Activated naive CD4-positive, alpha-beta T cell treated with anti-CD3 and anti-CD28 coated beads for 36 hours (primary cell): ENCODE measurements at regions of chr1 and their contacts with region 1.

Region 1: GRCh38 chr1:152869808-152870419 is 8.2 kb upstream of the SMCP start:
- DNase-seq: peak; percentile 79
- H3K4me3 Mint-ChIP-seq: no peak overlapping the region
- H3K27ac Mint-ChIP-seq: no peak overlapping the region
- H3K4me1 Mint-ChIP-seq: no peaks in the 10 kb centered on the region
- H3K27me3 Mint-ChIP-seq: peaks cover 3% of the 10 kb centered on the region

Region 2: GRCh38 chr1:152566681-152567080 is 303.2 kb before region 1 on chr1 and contains the start of gene LCE3E:
- CTCF ChIA-PET with region 1: no interaction called
- intact Hi-C with region 1: no loop called
- DNase-seq: no peak
- H3K4me3 Mint-ChIP-seq: no peak within 1 kb of the TSS
- H3K27ac Mint-ChIP-seq: no peak within 1 kb of the TSS
- H3K4me1 Mint-ChIP-seq: no peaks in the 10 kb centered on the region
- H3K27me3 Mint-ChIP-seq: peaks cover 8% of the 10 kb centered on the region
- total RNA-seq, gene LCE3E: not detected

Region 3: GRCh38 chr1:152654110-152654509 is 215.8 kb before region 1 on chr1:
- CTCF ChIA-PET with region 1: no interaction called
- intact Hi-C with region 1: loop called (anchors 1 kb)
- DNase-seq: peak; percentile 78
- H3K4me3 Mint-ChIP-seq: no peak overlapping the region
- H3K27ac Mint-ChIP-seq: no peak overlapping the region
- H3K4me1 Mint-ChIP-seq: peaks cover 3% of the 10 kb centered on the region
- H3K27me3 Mint-ChIP-seq: peaks cover 10% of the 10 kb centered on the region

Region 4: DNA sequence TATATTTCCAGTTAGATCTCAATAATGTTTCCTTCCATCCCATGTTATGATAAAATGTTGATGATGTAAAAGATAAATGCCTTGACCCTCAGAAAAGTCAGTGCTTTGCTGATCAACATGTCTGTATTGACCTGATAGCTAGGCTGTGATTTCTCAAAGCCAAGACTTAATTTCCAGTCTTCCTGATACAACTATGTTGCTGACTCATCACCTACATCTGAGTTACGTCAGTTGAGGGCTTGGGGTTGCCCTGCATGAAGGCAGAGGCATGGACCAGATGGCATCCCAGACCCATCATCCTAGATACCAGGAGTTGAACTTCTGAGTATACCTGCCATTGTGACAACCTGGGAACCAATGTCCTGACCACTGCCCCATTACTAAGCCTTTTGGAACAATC is 68.6 kb before region 1 on chr1:
- CTCF ChIA-PET with region 1: no interaction called
- intact Hi-C with region 1: no loop called
- DNase-seq: no peak
- H3K4me3 Mint-ChIP-seq: no peak overlapping the region
- H3K27ac Mint-ChIP-seq: no peak overlapping the region
- H3K4me1 Mint-ChIP-seq: no peaks in the 10 kb centered on the region
- H3K27me3 Mint-ChIP-seq: peaks cover 19% of the 10 kb centered on the region

Region 5: DNA sequence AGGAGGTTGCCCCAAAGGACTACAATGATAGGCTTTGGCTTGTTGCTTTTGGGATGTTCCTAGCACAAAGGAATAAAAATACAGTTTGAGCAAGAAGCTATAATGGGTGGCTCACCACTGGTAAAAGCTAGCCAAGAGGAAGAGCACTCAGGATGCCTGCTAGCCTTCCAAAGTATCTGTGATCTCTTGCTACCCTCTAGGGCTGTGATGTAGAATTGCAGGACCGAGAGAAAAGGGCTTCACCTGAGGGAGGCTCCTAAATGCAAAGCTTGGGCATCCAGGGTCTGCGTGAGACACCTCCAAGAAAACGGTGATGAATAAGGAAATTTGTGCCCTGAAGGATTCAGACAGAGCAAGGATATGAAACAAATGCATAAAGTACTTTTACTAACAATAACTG is 56.2 kb after region 1 on chr1:
- CTCF ChIA-PET with region 1: interaction called, 4 read pairs
- intact Hi-C with region 1: loop called (anchors 1 kb)
- DNase-seq: no peak
- H3K4me3 Mint-ChIP-seq: no peak overlapping the region
- H3K27ac Mint-ChIP-seq: no peak overlapping the region
- H3K4me1 Mint-ChIP-seq: no peaks in the 10 kb centered on the region
- H3K27me3 Mint-ChIP-seq: peaks cover 13% of the 10 kb centered on the region

Region 6: DNA sequence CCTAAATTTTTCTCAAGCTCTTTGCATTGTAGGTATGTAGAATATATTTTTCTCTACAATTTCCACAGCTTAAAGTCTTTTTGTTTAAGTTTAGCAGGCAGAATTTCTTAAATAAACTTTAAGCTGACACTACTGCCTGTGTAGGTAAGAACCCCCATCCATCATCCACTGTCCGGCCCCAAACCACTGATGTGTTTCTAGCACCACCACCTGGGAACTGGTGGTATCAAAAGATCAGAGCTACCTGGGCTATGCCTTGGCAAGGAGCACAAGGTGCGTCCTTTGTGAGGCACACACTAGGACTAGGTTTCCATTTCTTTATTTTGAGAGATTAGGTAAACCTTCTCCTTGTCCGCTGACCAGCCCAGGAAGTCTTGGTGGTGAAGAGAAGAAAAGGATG is 322.8 kb after region 1 on chr1:
- CTCF ChIA-PET with region 1: interaction called, 3 read pairs
- intact Hi-C with region 1: loop called (anchors 10 kb)
- DNase-seq: peak; percentile 17
- H3K4me3 Mint-ChIP-seq: no peak overlapping the region
- H3K27ac Mint-ChIP-seq: no peak overlapping the region
- H3K4me1 Mint-ChIP-seq: no peaks in the 10 kb centered on the region
- H3K27me3 Mint-ChIP-seq: peaks cover 28% of the 10 kb centered on the region

Region 7: GRCh38 chr1:153220606-153221303 is 350.8 kb after region 1 on chr1:
- CTCF ChIA-PET with region 1: interaction called, 7 read pairs
- intact Hi-C with region 1: loop called (anchors 1 kb)
- DNase-seq: no peak
- H3K4me3 Mint-ChIP-seq: no peak overlapping the region
- H3K27ac Mint-ChIP-seq: no peak overlapping the region
- H3K4me1 Mint-ChIP-seq: no peaks in the 10 kb centered on the region
- H3K27me3 Mint-ChIP-seq: peaks cover 4% of the 10 kb centered on the region

Region 8: DNA sequence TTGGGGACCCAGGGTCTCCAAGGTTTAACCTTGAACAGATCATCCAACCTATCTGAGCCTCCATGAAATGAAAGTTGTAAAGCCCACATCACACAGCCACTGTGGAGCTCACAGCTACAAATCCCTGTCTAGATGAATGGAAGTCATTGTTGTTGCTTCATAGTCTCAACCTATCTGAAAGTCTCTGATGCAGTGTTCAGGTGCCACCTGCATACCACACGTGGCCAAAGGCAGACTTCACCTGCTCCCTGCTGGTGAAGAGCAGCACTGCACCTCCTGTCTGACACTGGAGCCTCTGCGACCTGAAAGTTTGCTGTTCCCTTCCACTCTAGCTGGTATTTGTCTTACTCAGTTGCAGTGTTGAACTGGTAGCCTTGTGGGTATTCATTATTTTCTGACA is 407.9 kb after region 1 on chr1:
- CTCF ChIA-PET with region 1: no interaction called
- intact Hi-C with region 1: loop called (anchors 1 kb)
- DNase-seq: peak; percentile 74
- H3K4me3 Mint-ChIP-seq: no peak overlapping the region
- H3K27ac Mint-ChIP-seq: no peak overlapping the region
- H3K4me1 Mint-ChIP-seq: no peaks in the 10 kb centered on the region
- H3K27me3 Mint-ChIP-seq: peaks cover 9% of the 10 kb centered on the region